ENCODE measurements at regions of chr2 and their contacts with region 1.

Region 1: GRCh38 chr2:202429164-202429980 is 53.2 kb downstream of the BMPR2 start:
- DNase-seq: peak; percentile 90
- H3K4me3 ChIP-seq: no peak overlapping the region
- H3K27ac ChIP-seq: peak overlapping the region; percentile 75
- H3K4me1 ChIP-seq: peaks cover 18% of the 10 kb centered on the region
- H3K27me3 ChIP-seq: no peaks in the 10 kb centered on the region
- CTCF ChIP-seq: no peak
- POLR2A ChIP-seq: no peak

Region 2: DNA sequence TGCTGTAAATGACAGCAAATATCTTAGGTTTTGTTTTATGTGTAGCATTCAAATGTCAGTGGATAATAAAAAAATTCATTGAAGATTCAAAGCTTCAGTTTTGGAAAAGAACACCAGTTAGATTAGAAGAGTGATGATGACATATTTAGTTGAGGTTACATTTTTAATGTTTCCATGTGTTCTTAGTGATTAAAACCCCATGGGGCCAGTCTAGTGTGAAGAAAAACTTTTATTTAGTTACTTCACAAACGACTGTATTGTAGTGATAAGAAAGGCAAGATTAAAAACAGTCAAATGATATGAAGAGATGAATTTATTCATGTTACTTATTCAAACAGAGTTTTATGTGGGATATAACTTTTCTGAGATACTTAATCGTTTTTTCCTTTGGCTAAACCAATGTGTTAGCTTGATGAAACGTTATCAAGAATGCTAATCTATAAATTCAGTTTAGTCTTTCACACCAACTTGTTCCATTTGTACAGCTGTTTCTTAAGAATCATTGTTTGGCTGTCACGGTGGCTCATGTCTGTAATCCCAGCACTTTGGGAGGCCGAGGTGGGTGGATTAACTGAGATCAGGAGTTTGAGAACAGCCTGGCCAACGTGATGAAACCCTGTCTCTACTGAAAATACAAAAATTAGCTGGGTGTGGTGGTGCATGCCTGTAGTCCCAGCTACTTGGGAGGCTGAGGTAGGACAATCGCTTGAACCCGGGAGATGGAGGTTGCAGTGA is 41.6 kb before region 1 on chr2:
- CTCF ChIA-PET with region 1: no interaction called
- POLR2A ChIA-PET with region 1: no interaction called
- dilution Hi-C with region 1: no loop called
- intact Hi-C with region 1: no loop called
- DNase-seq: no peak
- H3K4me3 ChIP-seq: no peak overlapping the region
- H3K27ac ChIP-seq: no peak overlapping the region
- H3K4me1 ChIP-seq: peaks cover 18% of the 10 kb centered on the region
- H3K27me3 ChIP-seq: no peaks in the 10 kb centered on the region
- CTCF ChIP-seq: no peak
- POLR2A ChIP-seq: no peak

Region 3: DNA sequence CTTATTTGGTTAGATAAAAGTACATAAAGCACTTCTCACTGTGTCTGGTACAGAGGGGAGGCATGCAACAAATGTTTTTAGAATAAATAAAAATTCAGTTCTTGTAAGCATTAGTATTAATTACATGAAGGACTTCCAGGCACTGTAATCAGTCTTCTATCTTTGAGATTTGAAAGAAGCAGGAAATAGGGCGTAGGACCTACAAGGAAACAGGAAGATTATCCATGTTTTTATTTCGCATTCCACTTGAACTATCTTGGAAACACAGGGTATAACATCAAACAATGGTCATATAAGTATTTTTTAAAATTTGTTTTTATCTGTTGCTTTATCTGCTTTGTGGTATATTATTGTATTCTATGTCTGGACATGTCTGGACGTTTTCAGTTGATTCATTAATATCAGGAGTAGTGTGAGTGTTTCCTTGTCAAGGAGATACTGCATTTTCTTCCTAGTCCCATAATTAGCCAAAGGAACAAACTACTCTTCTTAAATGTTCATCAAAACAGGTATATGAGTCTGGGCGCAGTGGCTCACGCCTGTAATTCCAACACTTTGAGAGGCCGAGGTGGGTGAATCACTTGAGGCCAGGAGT is 20.7 kb before region 1 on chr2:
- CTCF ChIA-PET with region 1: no interaction called
- POLR2A ChIA-PET with region 1: no interaction called
- dilution Hi-C with region 1: no loop called
- intact Hi-C with region 1: loop called (anchors 2 kb)
- DNase-seq: peak; percentile 87
- H3K4me3 ChIP-seq: no peak overlapping the region
- H3K27ac ChIP-seq: peak overlapping the region; percentile 80
- H3K4me1 ChIP-seq: peaks cover 68% of the 10 kb centered on the region
- H3K27me3 ChIP-seq: no peaks in the 10 kb centered on the region
- CTCF ChIP-seq: no peak
- POLR2A ChIP-seq: peak; percentile 79

Region 4: DNA sequence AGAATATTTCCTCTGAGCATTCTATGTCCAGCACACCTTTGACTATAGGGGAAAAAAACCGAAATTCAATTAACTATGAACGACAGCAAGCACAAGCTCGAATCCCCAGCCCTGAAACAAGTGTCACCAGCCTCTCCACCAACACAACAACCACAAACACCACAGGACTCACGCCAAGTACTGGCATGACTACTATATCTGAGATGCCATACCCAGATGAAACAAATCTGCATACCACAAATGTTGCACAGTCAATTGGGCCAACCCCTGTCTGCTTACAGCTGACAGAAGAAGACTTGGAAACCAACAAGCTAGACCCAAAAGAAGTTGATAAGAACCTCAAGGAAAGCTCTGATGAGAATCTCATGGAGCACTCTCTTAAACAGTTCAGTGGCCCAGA is 126.0 kb after region 1 on chr2:
- CTCF ChIA-PET with region 1: no interaction called
- POLR2A ChIA-PET with region 1: no interaction called
- dilution Hi-C with region 1: no loop called
- intact Hi-C with region 1: no loop called
- DNase-seq: no peak
- H3K4me3 ChIP-seq: no peak overlapping the region
- H3K27ac ChIP-seq: no peak overlapping the region
- H3K4me1 ChIP-seq: no peaks in the 10 kb centered on the region
- H3K27me3 ChIP-seq: no peaks in the 10 kb centered on the region
- CTCF ChIP-seq: no peak
- POLR2A ChIP-seq: no peak